Left ventricle myocardium inferior (tissue), 1 donor: ENCODE measurements at regions of chr9 and their contacts with region 1.

Region 1: GRCh38 chr9:127586537-127586936 is 25.5 kb upstream of the STXBP1 start:
- DNase-seq: peak; percentile 72
- H3K4me3 ChIP-seq: no peak overlapping the region
- H3K27ac ChIP-seq: no peak overlapping the region
- H3K4me1 ChIP-seq: peaks cover 6% of the 10 kb centered on the region
- H3K27me3 ChIP-seq: no peaks in the 10 kb centered on the region
- CTCF ChIP-seq: peak; percentile 90

Region 2: DNA sequence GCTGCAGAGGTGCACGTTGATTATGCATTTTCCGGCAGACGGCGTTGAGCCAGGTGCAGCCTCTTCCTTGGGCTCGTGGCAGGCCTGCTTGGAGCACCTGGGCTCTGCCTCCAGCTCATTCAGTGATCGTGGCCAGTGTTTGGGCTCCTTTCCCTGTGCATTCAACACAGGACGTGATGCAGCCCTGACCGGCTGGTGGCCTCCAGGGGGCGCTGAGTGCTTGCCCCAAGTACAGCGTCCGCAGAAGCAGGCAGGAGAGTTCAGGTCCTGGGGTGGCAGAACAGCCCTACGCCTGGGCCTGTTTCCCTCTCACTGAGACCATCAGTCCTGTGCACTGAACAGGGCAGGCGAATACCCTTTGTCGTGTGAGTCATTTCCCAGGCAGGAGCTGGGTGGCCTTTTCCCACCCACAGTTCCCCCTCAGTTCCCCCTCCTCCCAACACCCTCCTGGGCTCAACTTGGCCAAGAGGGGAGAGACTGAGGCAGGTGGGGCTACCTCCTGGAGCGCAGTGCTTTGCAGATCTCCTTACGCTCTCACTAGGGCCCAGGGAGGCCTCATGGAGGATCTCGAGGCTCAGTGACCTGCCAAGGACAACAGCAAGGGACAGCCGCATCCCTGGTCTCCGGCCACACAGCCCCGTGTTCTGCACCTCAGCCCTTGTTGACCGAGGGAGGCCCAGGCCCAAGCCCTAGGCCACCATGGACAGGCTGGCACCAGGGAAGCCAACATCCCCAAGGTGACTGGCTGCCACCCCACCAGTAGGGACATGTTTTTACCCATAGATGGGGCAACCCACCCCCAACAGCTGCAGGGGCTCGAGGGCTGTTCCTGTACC is 82.4 kb before region 1 on chr9:
- intact Hi-C with region 1: loop called (anchors 5 kb)
- DNase-seq: peak; percentile 86
- H3K4me3 ChIP-seq: no peak overlapping the region
- H3K27ac ChIP-seq: peak overlapping the region; percentile 20
- H3K4me1 ChIP-seq: peaks cover 12% of the 10 kb centered on the region
- H3K27me3 ChIP-seq: no peaks in the 10 kb centered on the region
- CTCF ChIP-seq: peak; percentile 93

Region 3: GRCh38 chr9:127734747-127735529 is 148.4 kb after region 1 on chr9 and contains the start of gene TOR2A:
- intact Hi-C with region 1: loop called (anchors 5 kb)
- DNase-seq: peak; percentile 98
- H3K4me3 ChIP-seq: peak within 1 kb of the TSS; percentile 94
- H3K27ac ChIP-seq: peak within 1 kb of the TSS; percentile 98
- H3K4me1 ChIP-seq: peaks cover 32% of the 10 kb centered on the region
- H3K27me3 ChIP-seq: no peaks in the 10 kb centered on the region
- CTCF ChIP-seq: peak; percentile 89
- total RNA-seq, gene TOR2A: 2.3 TPM

Region 4: GRCh38 chr9:127921557-127922120 is 335.1 kb after region 1 on chr9:
- intact Hi-C with region 1: loop called (anchors 10 kb)
- DNase-seq: peak; percentile 70
- H3K4me3 ChIP-seq: peak overlapping the region; percentile 51
- H3K27ac ChIP-seq: no peak overlapping the region
- H3K4me1 ChIP-seq: peaks cover 43% of the 10 kb centered on the region
- H3K27me3 ChIP-seq: peaks cover 44% of the 10 kb centered on the region
- CTCF ChIP-seq: peak; percentile 98

Region 5: GRCh38 chr9:128370826-128371621 is 784.5 kb after region 1 on chr9 and contains the start of gene URM1:
- intact Hi-C with region 1: no loop called
- DNase-seq: peak; percentile 96
- H3K4me3 ChIP-seq: peak within 1 kb of the TSS; percentile 78
- H3K27ac ChIP-seq: peak within 1 kb of the TSS; percentile 98
- H3K4me1 ChIP-seq: peaks cover 33% of the 10 kb centered on the region
- H3K27me3 ChIP-seq: no peaks in the 10 kb centered on the region
- CTCF ChIP-seq: peak; percentile 14
- total RNA-seq, gene URM1: 57.0 TPM